GM13976 (cell line): ENCODE measurements at regions of chr3 and their contacts with region 1.

Region 1: GRCh38 chr3:177050501-177051237 is 146.6 kb downstream of the TBL1XR1 start:
- DNase-seq: no peak
- CTCF ChIP-seq: peak; percentile 8

Region 2: DNA sequence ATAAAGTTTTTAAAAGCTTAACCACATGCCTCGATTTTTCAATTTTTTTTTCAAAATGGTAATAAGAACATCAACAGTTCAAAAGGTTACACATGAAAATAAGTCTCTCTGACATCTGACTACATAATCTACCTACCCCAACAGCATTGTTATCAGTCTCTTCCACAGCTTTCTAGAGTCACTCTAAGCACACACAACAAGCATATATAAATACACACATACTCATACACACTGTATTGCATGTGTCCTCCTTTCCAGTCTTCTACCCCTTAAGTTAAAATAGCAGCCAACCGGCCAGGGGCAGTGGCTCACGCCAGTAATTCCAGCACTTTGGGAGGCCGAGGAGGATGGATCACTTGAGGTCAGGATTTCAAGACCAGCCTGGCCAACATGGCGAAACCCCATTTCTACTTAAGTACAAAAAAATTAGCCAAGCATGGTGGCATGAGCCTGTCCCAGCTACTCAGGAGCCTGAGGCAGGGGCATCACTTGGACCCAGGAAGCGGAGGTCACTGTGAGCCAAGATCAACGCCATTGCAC is 134.4 kb after region 1 on chr3:
- in situ Hi-C with region 1: loop called (anchors 10 kb)
- DNase-seq: no peak
- CTCF ChIP-seq: no peak

Region 3: GRCh38 chr3:177345049-177345972 is 294.6 kb after region 1 on chr3:
- in situ Hi-C with region 1: loop called (anchors 25 kb)
- DNase-seq: peak; percentile 50
- CTCF ChIP-seq: no peak